Activated CD8-positive, alpha-beta T cell treated with anti-CD3 and anti-CD28 coated beads for 36 hours (primary cell): ENCODE measurements at regions of chr11 and their contacts with region 1.

Region 1: DNA sequence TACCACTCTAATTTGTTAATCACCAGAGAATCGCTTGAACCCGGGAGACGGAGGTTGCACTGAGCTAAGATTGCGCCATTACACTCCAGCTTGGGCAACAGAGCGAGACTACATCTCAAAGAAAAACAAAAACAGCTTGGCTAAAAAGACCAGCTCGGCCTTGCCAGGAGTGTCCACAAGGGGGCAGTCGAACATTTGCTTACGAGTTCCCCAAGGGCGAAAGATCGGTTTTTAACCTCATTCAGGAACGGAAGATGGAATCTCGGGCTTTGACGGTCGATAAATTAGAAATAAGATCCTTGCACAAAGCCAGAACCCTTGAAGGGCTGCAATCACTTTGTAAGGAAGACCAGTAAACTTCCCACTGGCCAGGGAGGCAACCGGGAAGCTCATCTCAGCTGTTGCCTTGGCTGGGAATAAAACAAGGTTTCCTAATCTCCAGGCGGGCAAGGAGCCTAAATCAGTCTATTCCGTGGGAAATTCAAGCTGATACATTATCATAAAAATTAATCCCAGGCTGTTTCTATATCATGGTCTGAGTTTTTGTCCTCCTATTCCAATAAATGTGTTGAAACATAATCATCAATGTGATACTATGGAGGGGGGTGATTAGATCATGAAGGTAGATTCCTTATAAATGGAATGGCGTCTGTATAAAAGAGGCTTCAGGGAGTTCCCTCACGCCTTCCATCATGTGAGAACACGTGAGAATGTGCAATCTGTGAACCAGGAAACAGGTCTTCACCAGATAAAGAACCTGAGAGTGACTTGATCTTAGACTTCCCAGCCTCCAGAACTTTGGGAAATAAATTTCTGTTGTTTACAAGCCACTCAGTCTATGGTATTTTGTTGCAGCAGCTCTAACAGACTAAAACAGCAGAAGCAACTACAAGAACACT is 14.9 kb upstream of the SLC29A2 start:
- DNase-seq: peak; percentile 95
- ATAC-seq: peak; percentile 80
- H3K4me3 Mint-ChIP-seq: peak overlapping the region; percentile 18
- H3K27ac Mint-ChIP-seq: no peak overlapping the region
- H3K4me1 Mint-ChIP-seq: peaks cover 4% of the 10 kb centered on the region
- H3K27me3 Mint-ChIP-seq: no peaks in the 10 kb centered on the region
- CTCF ChIP-seq: peak; percentile 87

Region 2: DNA sequence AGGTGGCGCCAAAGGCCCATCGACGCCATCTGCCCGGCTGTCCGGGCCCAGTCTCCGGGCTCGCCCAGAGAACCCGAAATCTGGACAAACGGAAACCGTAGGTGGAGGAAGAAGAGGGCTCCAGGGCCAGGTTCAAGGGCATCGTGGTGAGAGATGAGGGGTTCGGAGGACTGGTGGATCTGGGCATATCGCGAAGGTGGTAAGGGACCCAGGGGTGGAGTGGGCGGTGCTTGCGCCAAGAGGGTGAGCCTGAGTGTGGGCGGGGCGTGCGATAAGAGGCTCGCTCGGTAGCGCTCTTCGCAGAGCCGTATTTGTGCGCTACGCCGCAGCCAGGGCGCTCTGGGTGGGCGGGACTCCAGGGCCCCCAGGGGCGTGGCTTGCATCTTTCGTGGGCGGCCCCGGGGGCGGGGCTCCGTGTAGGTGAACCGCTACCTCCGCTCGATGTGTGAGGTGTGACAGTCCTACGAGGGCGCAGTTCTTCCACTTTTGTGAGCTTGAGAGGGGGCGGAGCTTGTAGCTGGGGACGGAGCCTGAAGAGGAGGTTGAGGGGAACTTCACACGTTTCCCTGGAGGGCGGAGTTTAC is 74.4 kb before region 1 on chr11:
- CTCF ChIA-PET with region 1: interaction called, 149 read pairs
- POLR2A ChIA-PET with region 1: interaction called, 6 read pairs
- intact Hi-C with region 1: loop called (anchors 5 kb)
- DNase-seq: peak; percentile 99
- ATAC-seq: peak; percentile 68
- H3K4me3 Mint-ChIP-seq: peak overlapping the region; percentile 80
- H3K27ac Mint-ChIP-seq: peak overlapping the region; percentile 97
- H3K4me1 Mint-ChIP-seq: peaks cover 26% of the 10 kb centered on the region
- H3K27me3 Mint-ChIP-seq: no peaks in the 10 kb centered on the region
- CTCF ChIP-seq: peak; percentile 33

Region 3: DNA sequence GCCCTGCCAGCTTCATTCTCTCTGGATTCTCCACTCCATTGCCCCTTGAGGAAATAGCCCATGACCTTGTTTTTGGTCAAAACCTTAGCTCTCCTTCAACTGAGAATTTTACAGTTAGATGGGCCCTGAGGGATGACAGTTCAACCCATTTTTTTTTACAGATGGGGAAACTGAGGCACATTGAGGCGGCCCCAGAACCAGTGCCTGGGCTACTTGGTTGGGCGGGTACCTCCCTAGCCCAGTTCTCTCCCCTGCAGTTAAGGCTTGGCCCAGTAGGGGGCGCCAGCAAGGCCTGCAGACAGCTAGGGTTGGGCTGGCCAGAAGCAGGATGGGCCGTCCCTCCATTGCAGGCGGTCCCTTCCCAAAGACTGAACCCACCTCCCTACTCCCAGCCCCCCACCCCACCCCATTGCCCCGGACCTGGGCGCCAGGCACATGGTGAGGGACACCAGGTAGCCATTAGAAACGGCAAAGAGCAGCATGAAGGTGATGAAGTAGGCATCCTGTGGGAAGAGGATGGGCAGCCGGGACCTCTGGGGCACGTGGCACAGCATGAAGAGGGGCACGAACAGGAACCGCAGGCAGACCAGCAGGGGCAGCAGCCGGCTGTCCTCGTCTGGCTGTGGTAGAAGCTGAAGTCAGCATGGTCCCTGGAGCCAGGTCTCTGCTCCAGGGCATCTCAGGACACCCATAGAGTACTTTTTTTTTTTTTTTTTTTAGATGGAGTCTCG is 22.4 kb before region 1 on chr11:
- CTCF ChIA-PET with region 1: interaction called, 84 read pairs
- POLR2A ChIA-PET with region 1: no interaction called
- intact Hi-C with region 1: no loop called
- DNase-seq: peak; percentile 88
- ATAC-seq: peak; percentile 92
- H3K4me3 Mint-ChIP-seq: no peak overlapping the region
- H3K27ac Mint-ChIP-seq: no peak overlapping the region
- H3K4me1 Mint-ChIP-seq: peaks cover 4% of the 10 kb centered on the region
- H3K27me3 Mint-ChIP-seq: no peaks in the 10 kb centered on the region
- CTCF ChIP-seq: peak; percentile 93

Region 4: GRCh38 chr11:66408488-66409214 is 22.2 kb after region 1 on chr11:
- CTCF ChIA-PET with region 1: interaction called, 10 read pairs
- POLR2A ChIA-PET with region 1: no interaction called
- intact Hi-C with region 1: no loop called
- DNase-seq: peak; percentile 95
- ATAC-seq: peak; percentile 86
- H3K4me3 Mint-ChIP-seq: peak overlapping the region; percentile 67
- H3K27ac Mint-ChIP-seq: no peak overlapping the region
- H3K4me1 Mint-ChIP-seq: peaks cover 3% of the 10 kb centered on the region
- H3K27me3 Mint-ChIP-seq: peaks cover 20% of the 10 kb centered on the region
- CTCF ChIP-seq: peak; percentile 100

Region 5: GRCh38 chr11:66438504-66439466 is 52.4 kb after region 1 on chr11 and contains the start of gene MRPL11:
- CTCF ChIA-PET with region 1: interaction called, 12 read pairs
- POLR2A ChIA-PET with region 1: no interaction called
- intact Hi-C with region 1: no loop called
- DNase-seq: peak; percentile 97
- ATAC-seq: peak; percentile 99
- H3K4me3 Mint-ChIP-seq: peak within 1 kb of the TSS; percentile 96
- H3K27ac Mint-ChIP-seq: peak within 1 kb of the TSS; percentile 98
- H3K4me1 Mint-ChIP-seq: peaks cover 20% of the 10 kb centered on the region
- H3K27me3 Mint-ChIP-seq: peaks cover 1% of the 10 kb centered on the region
- CTCF ChIP-seq: peak; percentile 58
- total RNA-seq, gene MRPL11: 135 to 142 TPM

Region 6: GRCh38 chr11:66523462-66524010 is 137.1 kb after region 1 on chr11:
- CTCF ChIA-PET with region 1: no interaction called
- POLR2A ChIA-PET with region 1: no interaction called
- intact Hi-C with region 1: no loop called
- DNase-seq: no peak
- ATAC-seq: no peak
- H3K4me3 Mint-ChIP-seq: no peak overlapping the region
- H3K27ac Mint-ChIP-seq: no peak overlapping the region
- H3K4me1 Mint-ChIP-seq: no peaks in the 10 kb centered on the region
- H3K27me3 Mint-ChIP-seq: no peaks in the 10 kb centered on the region
- CTCF ChIP-seq: no peak

Region 7: DNA sequence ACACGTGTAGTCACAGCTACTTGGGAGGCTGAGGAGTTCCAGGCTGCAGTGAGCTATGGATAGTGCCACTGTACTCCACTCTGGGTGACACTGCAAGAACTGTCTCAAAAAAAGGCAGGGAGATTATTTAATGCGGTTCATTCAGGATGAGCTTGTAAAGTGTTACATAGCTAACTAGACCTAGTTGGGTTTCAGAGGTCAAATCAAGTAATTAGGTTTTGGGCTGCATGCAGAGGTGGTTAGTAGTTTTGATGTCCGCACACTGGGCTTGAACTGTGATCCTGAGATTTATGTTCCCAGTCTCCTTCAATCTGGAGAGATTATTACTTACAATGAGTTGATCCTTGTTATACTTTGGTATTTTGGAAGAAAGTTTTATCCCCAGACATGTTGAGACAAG is 250.0 kb after region 1 on chr11:
- CTCF ChIA-PET with region 1: no interaction called
- POLR2A ChIA-PET with region 1: no interaction called
- intact Hi-C with region 1: no loop called
- DNase-seq: no peak
- ATAC-seq: no peak
- H3K4me3 Mint-ChIP-seq: peak overlapping the region; percentile 7
- H3K27ac Mint-ChIP-seq: peak overlapping the region; percentile 90
- H3K4me1 Mint-ChIP-seq: peaks cover 43% of the 10 kb centered on the region
- H3K27me3 Mint-ChIP-seq: no peaks in the 10 kb centered on the region
- CTCF ChIP-seq: no peak